Activated CD4-positive, alpha-beta T cell treated with anti-CD3 and anti-CD28 coated beads for 36 hours (primary cell): ENCODE measurements at regions of chr6 and their contacts with region 1.

Region 1: GRCh38 chr6:6315660-6316059 is 4.8 kb downstream of the F13A1 start:
- DNase-seq: peak; percentile 58
- ATAC-seq: peak; percentile 33
- H3K4me3 Mint-ChIP-seq: no peak overlapping the region
- H3K27ac Mint-ChIP-seq: no peak overlapping the region
- H3K4me1 Mint-ChIP-seq: no peaks in the 10 kb centered on the region
- H3K27me3 Mint-ChIP-seq: peaks cover 39% of the 10 kb centered on the region

Region 2: GRCh38 chr6:6057424-6058053 is 258.1 kb before region 1 on chr6:
- CTCF ChIA-PET with region 1: no interaction called
- POLR2A ChIA-PET with region 1: no interaction called
- intact Hi-C with region 1: loop called in 1 of 2 experiments (anchors 1 kb)
- DNase-seq: no peak
- ATAC-seq: peak; percentile 51
- H3K4me3 Mint-ChIP-seq: no peak overlapping the region
- H3K27ac Mint-ChIP-seq: no peak overlapping the region
- H3K4me1 Mint-ChIP-seq: no peaks in the 10 kb centered on the region
- H3K27me3 Mint-ChIP-seq: peaks cover 16% of the 10 kb centered on the region

Region 3: DNA sequence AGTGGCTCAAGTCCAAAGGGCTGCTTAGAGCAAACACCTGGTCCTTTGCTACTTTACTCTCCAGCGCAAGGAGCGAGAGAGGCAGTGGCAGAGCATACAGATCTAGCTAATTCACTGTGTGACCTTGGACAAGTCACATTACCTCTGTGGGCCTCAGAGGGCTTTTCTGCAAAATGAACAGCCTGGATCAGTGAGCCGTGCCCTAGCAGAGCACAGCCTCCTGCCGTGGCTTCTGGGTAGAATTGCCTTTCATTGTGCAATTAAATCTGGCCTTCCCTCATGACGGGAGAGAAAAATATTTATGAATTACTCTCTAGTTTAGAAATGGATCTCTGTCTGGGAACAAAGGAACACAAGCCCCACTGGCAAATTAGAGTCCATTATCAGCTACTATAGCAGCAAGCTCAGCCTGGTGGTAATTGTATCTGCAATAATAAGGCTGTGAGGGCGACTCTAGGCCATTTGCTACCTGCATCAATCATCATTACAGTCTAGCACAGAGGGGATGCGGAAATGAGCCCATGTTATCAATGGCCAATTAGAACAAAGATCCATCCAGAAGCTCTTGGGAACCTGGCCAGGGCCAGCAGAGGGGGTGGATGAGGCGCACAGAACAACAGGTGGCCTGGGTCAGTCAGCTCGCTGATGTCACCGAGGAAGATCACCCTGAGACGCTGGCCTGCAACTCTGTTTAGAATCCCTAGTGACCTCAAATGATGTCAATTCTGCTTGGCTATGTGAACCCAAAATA is 158.7 kb after region 1 on chr6:
- CTCF ChIA-PET with region 1: no interaction called
- POLR2A ChIA-PET with region 1: no interaction called
- intact Hi-C with region 1: no loop called
- DNase-seq: no peak
- ATAC-seq: no peak
- H3K4me3 Mint-ChIP-seq: no peak overlapping the region
- H3K27ac Mint-ChIP-seq: no peak overlapping the region
- H3K4me1 Mint-ChIP-seq: no peaks in the 10 kb centered on the region
- H3K27me3 Mint-ChIP-seq: peaks cover 12% of the 10 kb centered on the region